ENCODE measurements at regions of chr10 and their contacts with region 1.

Region 1: DNA sequence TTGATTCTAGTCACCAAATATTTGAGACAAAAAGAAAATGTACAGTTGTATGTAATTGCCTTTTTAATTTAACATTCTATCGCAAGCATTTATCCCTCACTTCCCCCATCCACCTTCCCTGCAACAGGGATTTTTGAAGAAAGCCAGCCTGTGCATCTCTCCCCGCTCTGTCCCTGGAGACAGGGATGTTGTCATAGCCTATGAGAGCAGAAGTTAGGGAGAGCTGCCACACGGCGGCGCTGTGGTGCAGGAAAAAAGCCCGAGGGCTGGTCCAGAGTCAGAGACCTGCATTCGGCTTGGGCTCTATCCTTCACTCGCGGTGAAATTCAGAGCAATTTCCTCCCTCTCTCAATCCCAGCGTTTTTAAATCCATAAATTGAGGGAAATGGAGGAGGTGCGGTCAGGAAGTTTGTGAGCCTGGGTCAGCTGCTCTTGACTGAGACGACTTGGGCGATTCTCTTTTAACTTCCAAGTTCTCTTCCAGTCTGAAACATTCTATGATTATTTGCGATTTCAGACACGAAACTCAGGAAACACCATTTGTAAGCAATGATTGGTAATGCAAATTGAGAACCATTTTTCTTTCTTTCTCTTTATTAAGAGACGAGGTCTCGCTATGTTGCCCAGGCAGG is 17.5 kb downstream of the HKDC1 start:
- DNase-seq: peak; percentile 64
- ATAC-seq: peak; percentile 99
- H3K4me3 ChIP-seq: no peak overlapping the region
- H3K27ac ChIP-seq: no peak overlapping the region
- H3K4me1 ChIP-seq: no peaks in the 10 kb centered on the region
- H3K27me3 ChIP-seq: peaks cover 2% of the 10 kb centered on the region; the same call in 1 of the 2 replicates
- CTCF ChIP-seq: peak; percentile 94
- POLR2A ChIP-seq: peak; percentile 52; the same call in 1 of the 2 replicates
- RAD21 ChIP-seq: peak; percentile 98

Region 2: GRCh38 chr10:69318106-69318866 is 80.6 kb after region 1 on chr10:
- CTCF ChIA-PET with region 1: no interaction called
- POLR2A ChIA-PET with region 1: no interaction called
- dilution Hi-C with region 1: no loop called
- in situ Hi-C with region 1: no loop called
- intact Hi-C with region 1: loop called (anchors 5 kb)
- DNase-seq: peak; percentile 77
- ATAC-seq: peak; percentile 92
- H3K4me3 ChIP-seq: peak overlapping the region; percentile 90
- H3K27ac ChIP-seq: peak overlapping the region; percentile 41
- H3K4me1 ChIP-seq: peaks cover 30% of the 10 kb centered on the region
- H3K27me3 ChIP-seq: no peaks in the 10 kb centered on the region
- CTCF ChIP-seq: no peak
- POLR2A ChIP-seq: 0 out of 2 replicates have a peak, but pooled peaks have one; percentile 8
- RAD21 ChIP-seq: no peak

Region 3: GRCh38 chr10:69383558-69383957 is 145.9 kb after region 1 on chr10:
- CTCF ChIA-PET with region 1: interaction called, 9 read pairs
- POLR2A ChIA-PET with region 1: no interaction called
- dilution Hi-C with region 1: no loop called
- in situ Hi-C with region 1: no loop called
- intact Hi-C with region 1: loop called (anchors 2 kb)
- DNase-seq: peak; percentile 84
- ATAC-seq: peak; percentile 95
- H3K4me3 ChIP-seq: no peak overlapping the region
- H3K27ac ChIP-seq: no peak overlapping the region
- H3K4me1 ChIP-seq: peaks cover 7% of the 10 kb centered on the region
- H3K27me3 ChIP-seq: no peaks in the 10 kb centered on the region
- CTCF ChIP-seq: peak; percentile 40
- POLR2A ChIP-seq: no peak
- RAD21 ChIP-seq: peak; percentile 49

Region 4: GRCh38 chr10:69392481-69393000 is 154.9 kb after region 1 on chr10:
- CTCF ChIA-PET with region 1: interaction called, 5 read pairs
- POLR2A ChIA-PET with region 1: interaction called, 3 read pairs
- dilution Hi-C with region 1: no loop called
- in situ Hi-C with region 1: loop called (anchors 5 kb)
- intact Hi-C with region 1: loop called (anchors 1 kb)
- DNase-seq: peak; percentile 77
- ATAC-seq: peak; percentile 98
- H3K4me3 ChIP-seq: no peak overlapping the region
- H3K27ac ChIP-seq: no peak overlapping the region
- H3K4me1 ChIP-seq: no peaks in the 10 kb centered on the region; the same call in 1 of the 2 replicates
- H3K27me3 ChIP-seq: no peaks in the 10 kb centered on the region
- CTCF ChIP-seq: peak; percentile 95
- POLR2A ChIP-seq: 0 out of 2 replicates have a peak, but pooled peaks have one; percentile 24
- RAD21 ChIP-seq: peak; percentile 99

Region 5: GRCh38 chr10:69408318-69409175 is 170.9 kb after region 1 on chr10:
- CTCF ChIA-PET with region 1: interaction called, 5 read pairs
- POLR2A ChIA-PET with region 1: no interaction called
- dilution Hi-C with region 1: no loop called
- in situ Hi-C with region 1: no loop called
- intact Hi-C with region 1: loop called (anchors 1 kb)
- DNase-seq: peak; percentile 89
- ATAC-seq: peak; percentile 92
- H3K4me3 ChIP-seq: peak overlapping the region; percentile 51
- H3K27ac ChIP-seq: no peak overlapping the region
- H3K4me1 ChIP-seq: peaks cover 6% of the 10 kb centered on the region
- H3K27me3 ChIP-seq: no peaks in the 10 kb centered on the region; the same call in 1 of the 2 replicates
- CTCF ChIP-seq: peak; percentile 60
- POLR2A ChIP-seq: no peak
- RAD21 ChIP-seq: peak; percentile 43; the same call in 1 of the 2 replicates

Region 6: DNA sequence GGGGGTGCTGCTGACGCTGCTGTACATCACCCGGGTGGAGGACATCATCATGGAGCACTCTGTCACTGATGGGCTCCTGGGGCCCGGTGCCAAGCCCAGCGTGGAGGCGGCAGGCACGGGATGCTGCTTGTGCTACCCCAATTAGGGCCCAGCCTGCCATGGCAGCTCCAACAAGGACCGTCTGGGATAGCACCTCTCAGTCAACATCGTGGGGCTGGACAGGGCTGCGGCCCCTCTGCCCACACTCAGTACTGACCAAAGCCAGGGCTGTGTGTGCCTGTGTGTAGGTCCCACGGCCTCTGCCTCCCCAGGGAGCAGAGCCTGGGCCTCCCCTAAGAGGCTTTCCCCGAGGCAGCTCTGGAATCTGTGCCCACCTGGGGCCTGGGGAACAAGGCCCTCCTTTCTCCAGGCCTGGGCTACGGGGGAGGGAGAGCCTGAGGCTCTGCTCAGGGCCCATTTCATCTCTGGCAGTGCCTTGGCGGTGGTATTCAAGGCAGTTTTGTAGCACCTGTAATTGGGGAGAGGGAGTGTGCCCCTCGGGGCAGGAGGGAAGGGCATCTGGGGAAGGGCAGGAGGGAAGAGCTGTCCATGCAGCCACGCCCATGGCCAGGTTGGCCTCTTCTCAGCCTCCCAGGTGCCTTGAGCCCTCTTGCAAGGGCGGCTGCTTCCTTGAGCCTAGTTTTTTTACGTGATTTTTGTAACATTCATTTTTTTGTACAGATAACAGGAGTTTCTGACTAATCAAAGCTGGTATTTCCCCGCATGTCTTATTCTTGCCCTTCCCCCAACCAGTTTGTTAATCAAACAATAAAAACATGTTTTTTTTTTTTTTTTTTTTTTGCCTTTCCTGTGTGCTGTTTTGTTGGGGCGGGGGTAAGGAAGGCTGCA is 269.4 kb after region 1 on chr10:
- CTCF ChIA-PET with region 1: no interaction called
- POLR2A ChIA-PET with region 1: no interaction called
- dilution Hi-C with region 1: no loop called
- in situ Hi-C with region 1: loop called (anchors 10 kb)
- intact Hi-C with region 1: loop called (anchors 2 kb)
- DNase-seq: no peak
- ATAC-seq: no peak
- H3K4me3 ChIP-seq: no peak overlapping the region
- H3K27ac ChIP-seq: no peak overlapping the region
- H3K4me1 ChIP-seq: no peaks in the 10 kb centered on the region
- H3K27me3 ChIP-seq: peaks cover 40% of the 10 kb centered on the region
- CTCF ChIP-seq: no peak
- POLR2A ChIP-seq: no peak
- RAD21 ChIP-seq: no peak

Measured in IMR-90 (cell line).